GM12878 (cell line): ENCODE measurements at regions of chr1 and their contacts with region 1.

Region 1: GRCh38 chr1:26993237-26994019 is at the start of gene TRNP1:
- DNase-seq: no peak
- ATAC-seq: peak; percentile 74
- H3K4me3 ChIP-seq: peak within 1 kb of the TSS; percentile 58
- H3K27ac ChIP-seq: no peak within 1 kb of the TSS
- H3K4me1 ChIP-seq: peaks cover 5% of the 10 kb centered on the region
- H3K27me3 ChIP-seq: peaks cover 2 to 13% of the 10 kb centered on the region in 2 experiments
- CTCF ChIP-seq: no peak
- EP300 ChIP-seq: no peak
- POLR2A ChIP-seq: peak; percentile 48; the same call in 1 of the 2 replicates
- RAD21 ChIP-seq: no peak
- polyA plus RNA-seq, gene TRNP1: not detected

Region 2: GRCh38 chr1:26959722-26960615 is 33.5 kb before region 1 on chr1 and contains the start of gene KDF1:
- CTCF ChIA-PET with region 1: no interaction called
- POLR2A ChIA-PET with region 1: no interaction called
- RAD21 ChIA-PET with region 1: no interaction called
- SMC1A ChIA-PET with region 1: no interaction called
- in situ Hi-C with region 1: no loop called
- intact Hi-C with region 1: no loop called
- DNase-seq: no peak
- ATAC-seq: peak; percentile 46; the same call in 2 of the 3 replicates
- H3K4me3 ChIP-seq: peak within 1 kb of the TSS; percentile 50; the same call in 1 of the 2 replicates
- H3K27ac ChIP-seq: no peak within 1 kb of the TSS
- H3K4me1 ChIP-seq: no peaks in the 10 kb centered on the region
- H3K27me3 ChIP-seq: peaks cover 6 to 7% of the 10 kb centered on the region in 2 experiments
- CTCF ChIP-seq: peak in 2 of 3 experiments; percentile 2 to 16; a peak in 1 of 6 replicates
- EP300 ChIP-seq: no peak
- POLR2A ChIP-seq: no peak
- RAD21 ChIP-seq: no peak
- polyA plus RNA-seq, gene KDF1: not detected

Region 3: DNA sequence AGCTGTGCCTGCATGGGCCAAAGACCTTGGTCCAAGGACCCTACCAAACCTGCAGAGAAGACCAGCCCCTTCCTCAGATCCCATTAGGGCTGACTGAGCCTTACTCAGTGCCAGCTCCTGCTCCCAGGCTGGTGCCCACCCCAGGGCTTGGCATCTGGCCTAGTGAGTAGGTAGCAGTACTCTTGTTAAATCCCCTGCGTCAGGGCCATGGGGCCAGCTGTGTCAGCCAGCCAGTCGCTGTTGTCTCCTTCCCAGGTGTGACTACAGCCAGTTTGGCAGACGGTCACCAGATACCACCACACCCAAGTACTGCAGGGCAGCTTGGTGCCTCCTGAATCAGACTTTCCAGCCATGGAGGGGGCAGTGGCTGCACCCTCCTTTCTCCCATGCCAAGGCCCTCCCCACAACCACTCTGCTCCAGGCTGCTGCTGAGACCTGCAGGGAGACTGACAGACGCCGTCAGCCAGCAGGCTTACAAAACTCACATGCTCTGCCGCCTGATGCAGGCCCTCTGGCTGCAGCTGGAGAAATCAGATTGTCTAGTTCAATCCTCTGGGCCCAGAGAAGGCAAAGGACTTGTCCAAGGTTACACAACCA is 16.3 kb after region 1 on chr1:
- CTCF ChIA-PET with region 1: interaction called, 31 read pairs
- POLR2A ChIA-PET with region 1: interaction called, 3 read pairs
- RAD21 ChIA-PET with region 1: no interaction called
- SMC1A ChIA-PET with region 1: no interaction called
- in situ Hi-C with region 1: no loop called
- intact Hi-C with region 1: no loop called
- DNase-seq: no peak
- ATAC-seq: no peak
- H3K4me3 ChIP-seq: no peak overlapping the region
- H3K27ac ChIP-seq: no peak overlapping the region
- H3K4me1 ChIP-seq: no peaks in the 10 kb centered on the region
- H3K27me3 ChIP-seq: peaks cover 3 to 5% of the 10 kb centered on the region in 2 experiments; a peak in 3 of 4 replicates
- CTCF ChIP-seq: no peak
- EP300 ChIP-seq: no peak
- POLR2A ChIP-seq: no peak
- RAD21 ChIP-seq: no peak

Region 4: GRCh38 chr1:27031235-27032118 is 38.0 kb after region 1 on chr1:
- CTCF ChIA-PET with region 1: interaction called, 7 read pairs
- POLR2A ChIA-PET with region 1: no interaction called
- RAD21 ChIA-PET with region 1: no interaction called
- SMC1A ChIA-PET with region 1: interaction called, 3 read pairs
- in situ Hi-C with region 1: no loop called
- intact Hi-C with region 1: loop called (anchors 1 kb)
- DNase-seq: no peak
- ATAC-seq: no peak
- H3K4me3 ChIP-seq: no peak overlapping the region
- H3K27ac ChIP-seq: no peak overlapping the region
- H3K4me1 ChIP-seq: no peaks in the 10 kb centered on the region
- H3K27me3 ChIP-seq: no peaks in the 10 kb centered on the region
- CTCF ChIP-seq: no peak
- EP300 ChIP-seq: no peak
- POLR2A ChIP-seq: no peak
- RAD21 ChIP-seq: no peak

Region 5: GRCh38 chr1:27097484-27097917 is 104.1 kb after region 1 on chr1:
- CTCF ChIA-PET with region 1: interaction called, 99 read pairs
- POLR2A ChIA-PET with region 1: no interaction called
- RAD21 ChIA-PET with region 1: interaction called, 30 read pairs
- SMC1A ChIA-PET with region 1: interaction called, 35 read pairs
- in situ Hi-C with region 1: no loop called
- intact Hi-C with region 1: loop called (anchors 1 kb)
- DNase-seq: no peak
- ATAC-seq: peak; percentile 78
- H3K4me3 ChIP-seq: no peak overlapping the region
- H3K27ac ChIP-seq: no peak overlapping the region
- H3K4me1 ChIP-seq: peaks cover 14% of the 10 kb centered on the region
- H3K27me3 ChIP-seq: no peaks in the 10 kb centered on the region
- CTCF ChIP-seq: peak; percentile 94 to 97 (median 94)
- EP300 ChIP-seq: no peak
- POLR2A ChIP-seq: no peak
- RAD21 ChIP-seq: peak; percentile 81